Mammary epithelial cell (primary cell): ENCODE measurements at regions of chr17 and their contacts with region 1.

Region 1: GRCh38 chr17:56715613-56716357 is 117.9 kb downstream of the C17orf67 start:
- DNase-seq: peak; percentile 71
- H3K4me3 ChIP-seq: no peak overlapping the region
- H3K27ac ChIP-seq: no peak overlapping the region
- H3K4me1 ChIP-seq: peaks cover 15% of the 10 kb centered on the region
- H3K27me3 ChIP-seq: no peaks in the 10 kb centered on the region
- CTCF ChIP-seq: peak; percentile 60 to 77

Region 2: GRCh38 chr17:56125830-56126819 is 589.7 kb before region 1 on chr17:
- CTCF ChIA-PET with region 1: interaction called, 4 read pairs
- dilution Hi-C with region 1: no loop called
- in situ Hi-C with region 1: no loop called
- intact Hi-C with region 1: loop called (anchors 2 kb)
- DNase-seq: peak; percentile 17
- H3K4me3 ChIP-seq: no peak overlapping the region
- H3K27ac ChIP-seq: no peak overlapping the region
- H3K4me1 ChIP-seq: no peaks in the 10 kb centered on the region
- H3K27me3 ChIP-seq: no peaks in the 10 kb centered on the region
- CTCF ChIP-seq: peak; percentile 60 to 77

Region 3: GRCh38 chr17:56499799-56500388 is 215.9 kb before region 1 on chr17:
- CTCF ChIA-PET with region 1: interaction called, 21 read pairs
- dilution Hi-C with region 1: loop called (anchors 5 kb)
- in situ Hi-C with region 1: no loop called
- intact Hi-C with region 1: loop called (anchors 1 kb)
- DNase-seq: peak; percentile 23
- H3K4me3 ChIP-seq: no peak overlapping the region
- H3K27ac ChIP-seq: no peak overlapping the region
- H3K4me1 ChIP-seq: no peaks in the 10 kb centered on the region
- H3K27me3 ChIP-seq: no peaks in the 10 kb centered on the region
- CTCF ChIP-seq: peak; percentile 54 to 55

Region 4: DNA sequence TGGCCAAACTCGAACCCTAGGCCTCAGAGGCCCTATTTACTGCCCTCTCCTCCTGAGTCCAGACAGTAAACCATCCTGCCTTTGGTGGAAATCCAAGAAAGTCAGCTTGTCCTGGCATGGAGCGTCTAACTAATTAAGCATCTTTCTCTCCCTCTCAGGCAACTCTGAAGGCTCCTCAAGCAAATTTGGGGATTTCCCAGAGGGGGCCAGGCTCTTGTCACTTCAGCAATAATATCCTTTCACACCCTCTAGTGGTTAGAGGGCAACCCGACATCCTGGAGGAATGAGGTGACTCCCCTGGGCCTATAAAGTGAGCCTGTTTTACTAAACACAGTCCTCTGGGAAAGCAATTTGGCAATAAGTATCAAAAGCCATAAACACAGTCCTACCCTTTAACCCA is 61.9 kb before region 1 on chr17:
- CTCF ChIA-PET with region 1: no interaction called
- dilution Hi-C with region 1: no loop called
- in situ Hi-C with region 1: no loop called
- intact Hi-C with region 1: loop called (anchors 1 kb)
- DNase-seq: peak; percentile 75
- H3K4me3 ChIP-seq: no peak overlapping the region
- H3K27ac ChIP-seq: no peak overlapping the region
- H3K4me1 ChIP-seq: peaks cover 1% of the 10 kb centered on the region
- H3K27me3 ChIP-seq: no peaks in the 10 kb centered on the region
- CTCF ChIP-seq: peak; percentile 74 to 77

Region 5: GRCh38 chr17:56699186-56699895 is 16.4 kb before region 1 on chr17:
- CTCF ChIA-PET with region 1: interaction called, 4 read pairs
- dilution Hi-C with region 1: no loop called
- in situ Hi-C with region 1: no loop called
- intact Hi-C with region 1: loop called (anchors 1 kb)
- DNase-seq: peak; percentile 99
- H3K4me3 ChIP-seq: no peak overlapping the region
- H3K27ac ChIP-seq: peak overlapping the region; percentile 31
- H3K4me1 ChIP-seq: peaks cover 21% of the 10 kb centered on the region
- H3K27me3 ChIP-seq: no peaks in the 10 kb centered on the region
- CTCF ChIP-seq: no peak